Pancreas (tissue), 10 donors: ENCODE measurements at regions of chr18 and their contacts with region 1.

Region 1: DNA sequence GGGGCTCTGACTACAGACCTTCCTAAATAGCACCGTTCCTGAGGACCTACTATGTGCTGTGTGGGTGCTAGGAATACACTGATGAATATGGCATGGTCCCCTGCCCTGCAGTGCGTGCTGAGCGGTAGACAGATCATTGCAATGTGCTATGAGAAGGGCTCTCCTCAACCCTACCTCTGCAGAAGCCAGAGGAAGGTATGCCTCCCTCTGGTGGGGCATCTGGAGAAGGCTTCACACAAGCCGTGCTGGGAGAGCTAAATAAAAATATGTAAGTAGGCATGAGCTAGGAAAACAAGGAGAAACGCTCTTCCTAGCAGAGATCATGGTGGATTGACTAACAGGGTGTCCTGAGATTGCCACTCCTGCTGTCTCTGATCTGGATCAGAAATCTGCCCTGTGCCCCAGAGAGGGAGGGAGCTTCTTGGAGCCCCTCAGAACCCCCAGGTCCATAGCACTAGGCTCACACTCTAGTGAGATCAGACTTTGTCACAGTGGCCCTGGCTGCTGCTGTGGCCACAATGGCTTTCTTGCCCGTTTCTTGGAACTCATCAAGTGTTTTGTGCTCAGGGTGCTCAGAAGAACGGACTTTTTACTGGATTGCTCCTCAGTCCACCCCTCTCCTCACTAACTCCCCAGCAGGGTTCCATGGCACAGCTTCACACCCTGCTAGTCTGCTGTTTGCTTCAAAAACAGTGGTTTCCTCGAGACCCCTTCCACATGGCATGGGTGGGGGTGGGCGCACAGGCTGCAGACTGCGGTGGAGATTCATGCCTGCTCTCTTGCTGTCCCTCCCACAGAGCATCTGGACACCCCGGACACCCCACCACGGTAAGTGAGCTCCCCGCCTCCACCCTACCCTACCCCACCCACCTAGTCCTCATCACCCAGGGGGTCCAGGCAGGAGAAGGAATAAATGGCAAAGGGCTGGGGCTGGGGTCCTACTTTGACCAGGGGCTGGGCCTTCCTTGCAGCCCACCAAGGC is 14.2 kb downstream of the SIGLEC15 start:
- DNase-seq: peak in 1 of 6 donors; percentile 46
- ATAC-seq: peak; percentile 41 to 76 (median 72)
- H3K4me3 ChIP-seq: no peak overlapping the region
- H3K27ac ChIP-seq: no peak overlapping the region
- H3K4me1 ChIP-seq: peaks cover 0 to 7% (median 4%) of the 10 kb centered on the region in 3 donors
- H3K27me3 ChIP-seq: no peaks in the 10 kb centered on the region
- CTCF ChIP-seq: peak; percentile 11 to 33 (median 21)

Region 2: DNA sequence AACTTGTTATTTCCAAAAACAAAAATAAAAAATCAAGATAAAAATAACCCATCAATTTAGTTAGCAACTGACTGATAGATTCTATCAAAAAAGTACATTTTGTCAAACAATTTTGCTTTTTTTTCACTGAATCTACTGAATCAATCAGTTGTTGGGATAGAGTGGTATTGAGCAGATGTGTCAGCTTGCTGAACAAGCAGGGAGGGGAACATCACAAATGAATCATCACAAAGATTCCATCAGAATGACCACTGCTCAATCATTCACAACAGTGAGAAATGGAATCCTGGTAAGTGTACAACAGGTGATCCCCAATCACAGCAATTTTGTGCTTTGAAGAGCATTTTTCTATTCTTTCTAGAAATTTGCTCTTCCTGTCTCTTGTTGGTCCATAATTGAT is 236.8 kb before region 1 on chr18:
- intact Hi-C with region 1: no loop called
- DNase-seq: no peak
- ATAC-seq: no peak
- H3K4me3 ChIP-seq: no peak overlapping the region
- H3K27ac ChIP-seq: no peak overlapping the region
- H3K4me1 ChIP-seq: no peaks in the 10 kb centered on the region
- H3K27me3 ChIP-seq: no peaks in the 10 kb centered on the region
- CTCF ChIP-seq: no peak

Region 3: DNA sequence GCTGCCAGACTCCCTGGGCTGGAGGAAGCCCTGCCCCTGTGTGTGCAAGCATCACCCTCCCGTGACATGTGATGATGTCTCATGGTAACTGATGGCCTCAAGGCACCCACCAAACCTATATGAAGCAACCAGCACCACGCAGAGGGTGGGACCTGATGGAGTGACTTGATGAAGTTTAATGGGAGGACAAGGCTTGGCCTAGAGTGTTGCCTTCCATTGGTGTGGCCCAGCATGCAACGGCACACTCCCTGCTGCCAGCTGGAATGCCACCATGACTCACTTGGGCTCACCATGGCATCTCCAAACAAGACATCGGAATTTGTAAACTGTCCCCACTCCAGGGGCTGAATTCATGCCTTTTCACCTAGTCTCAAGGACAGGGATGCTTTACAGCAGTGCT is 124.4 kb before region 1 on chr18:
- intact Hi-C with region 1: loop called in 1 of 3 experiments (anchors 10 kb)
- DNase-seq: no peak
- ATAC-seq: no peak
- H3K4me3 ChIP-seq: no peak overlapping the region
- H3K27ac ChIP-seq: no peak overlapping the region
- H3K4me1 ChIP-seq: no peaks in the 10 kb centered on the region
- H3K27me3 ChIP-seq: no peaks in the 10 kb centered on the region
- CTCF ChIP-seq: no peak